Ovary (tissue), 10 donors: ENCODE measurements at regions of chr12 and their contacts with region 1.

Region 1: GRCh38 chr12:27064397-27065342 is 17.7 kb downstream of the C12orf71 start:
- DNase-seq: no peak
- H3K4me3 ChIP-seq: no peak overlapping the region
- H3K27ac ChIP-seq: no peak overlapping the region
- H3K4me1 ChIP-seq: no peaks in the 10 kb centered on the region
- H3K27me3 ChIP-seq: no peaks in the 10 kb centered on the region
- CTCF ChIP-seq: no peak
- EP300 ChIP-seq: no peak
- POLR2A ChIP-seq: no peak

Region 2: DNA sequence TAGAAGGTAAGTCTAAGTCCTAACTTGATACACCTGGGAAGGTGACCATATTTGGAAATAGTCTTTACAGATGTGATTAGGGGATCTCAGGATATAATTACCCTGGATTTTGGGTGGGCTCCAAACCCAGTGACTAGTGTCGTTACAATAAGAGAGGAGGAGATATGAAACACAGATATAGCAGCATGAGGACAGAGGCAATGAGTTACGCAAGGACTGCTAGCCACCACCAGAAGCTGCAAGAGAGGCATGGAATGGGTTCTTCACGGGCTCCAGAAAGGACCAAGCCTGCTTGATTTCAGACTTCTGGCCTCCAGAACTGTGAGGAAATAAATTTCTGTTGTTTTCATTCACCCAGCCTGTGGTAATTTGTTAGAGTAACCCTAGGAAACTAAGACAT is 97.8 kb before region 1 on chr12:
- intact Hi-C with region 1: loop called in 1 of 4 experiments (anchors 5 kb)
- DNase-seq: no peak
- H3K4me3 ChIP-seq: no peak overlapping the region
- H3K27ac ChIP-seq: no peak overlapping the region
- H3K4me1 ChIP-seq: no peaks in the 10 kb centered on the region
- H3K27me3 ChIP-seq: no peaks in the 10 kb centered on the region
- CTCF ChIP-seq: no peak
- EP300 ChIP-seq: no peak
- POLR2A ChIP-seq: no peak

Region 3: DNA sequence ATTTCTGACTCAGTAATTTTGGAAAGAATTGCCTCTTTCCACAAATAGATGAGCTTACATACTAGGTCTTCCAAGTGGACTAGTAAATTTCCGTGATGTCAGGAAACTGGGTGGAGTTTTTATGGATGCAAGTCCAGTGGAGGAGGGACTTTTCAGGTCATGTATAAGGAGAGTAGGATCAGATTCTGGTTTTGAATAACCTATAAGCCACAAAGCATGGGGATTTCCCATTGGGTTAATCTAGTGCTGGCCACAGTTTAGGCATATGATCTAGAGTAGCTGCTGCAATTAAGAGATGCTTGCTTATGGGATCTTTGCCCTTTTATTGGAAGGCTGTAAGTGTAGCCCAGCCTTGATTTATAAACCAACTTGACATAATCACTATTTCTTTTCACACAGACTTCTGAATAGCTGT is 213.2 kb after region 1 on chr12:
- intact Hi-C with region 1: no loop called
- DNase-seq: peak in 1 of 5 donors; percentile 39
- H3K4me3 ChIP-seq: no peak overlapping the region
- H3K27ac ChIP-seq: no peak overlapping the region
- H3K4me1 ChIP-seq: peaks cover 6% of the 10 kb centered on the region
- H3K27me3 ChIP-seq: no peaks in the 10 kb centered on the region
- CTCF ChIP-seq: no peak
- EP300 ChIP-seq: no peak
- POLR2A ChIP-seq: no peak